ENCODE measurements at regions of chr2 and their contacts with region 1.

Region 1: GRCh38 chr2:162243294-162243693 is at the start of gene FAP:
- DNase-seq: no peak
- ATAC-seq: no peak
- H3K4me3 Mint-ChIP-seq: no peak within 1 kb of the TSS
- H3K27ac Mint-ChIP-seq: no peak within 1 kb of the TSS
- H3K4me1 Mint-ChIP-seq: no peaks in the 10 kb centered on the region
- H3K27me3 Mint-ChIP-seq: peaks cover 17% of the 10 kb centered on the region
- CTCF ChIP-seq: no peak
- total RNA-seq, gene FAP: not detected

Region 2: DNA sequence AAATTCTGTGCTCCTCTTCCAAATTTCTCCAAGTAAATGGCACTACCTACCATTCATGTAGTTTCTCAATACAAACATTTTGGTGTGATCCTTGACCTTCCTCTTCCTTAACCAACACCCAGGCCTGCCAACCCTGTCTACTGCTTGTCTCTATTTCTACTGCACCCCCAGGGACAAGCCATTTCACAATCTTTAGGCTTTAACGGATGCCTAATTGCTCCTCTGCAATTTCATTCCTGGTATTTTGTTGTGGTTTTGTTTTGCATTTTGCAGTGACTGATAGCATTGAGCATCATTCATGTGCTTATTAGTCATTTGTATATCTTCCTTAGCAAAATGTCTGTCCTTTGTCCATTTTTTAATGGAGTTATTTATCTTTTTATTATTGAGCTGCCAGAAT is 10.1 kb before region 1 on chr2:
- CTCF ChIA-PET with region 1: interaction called, 10 read pairs
- POLR2A ChIA-PET with region 1: no interaction called
- intact Hi-C with region 1: no loop called
- DNase-seq: no peak
- ATAC-seq: no peak
- H3K4me3 Mint-ChIP-seq: no peak overlapping the region
- H3K27ac Mint-ChIP-seq: no peak overlapping the region
- H3K4me1 Mint-ChIP-seq: no peaks in the 10 kb centered on the region
- H3K27me3 Mint-ChIP-seq: peaks cover 9% of the 10 kb centered on the region
- CTCF ChIP-seq: no peak

Region 3: GRCh38 chr2:162266460-162266760 is 23.1 kb after region 1 on chr2:
- CTCF ChIA-PET with region 1: no interaction called
- POLR2A ChIA-PET with region 1: no interaction called
- intact Hi-C with region 1: no loop called
- DNase-seq: no peak
- ATAC-seq: no peak
- H3K4me3 Mint-ChIP-seq: no peak overlapping the region
- H3K27ac Mint-ChIP-seq: no peak overlapping the region
- H3K4me1 Mint-ChIP-seq: peaks cover 6% of the 10 kb centered on the region
- H3K27me3 Mint-ChIP-seq: no peaks in the 10 kb centered on the region
- CTCF ChIP-seq: no peak

Region 4: GRCh38 chr2:162430323-162430722 is 187.0 kb after region 1 on chr2:
- CTCF ChIA-PET with region 1: no interaction called
- POLR2A ChIA-PET with region 1: no interaction called
- intact Hi-C with region 1: no loop called
- DNase-seq: no peak
- ATAC-seq: no peak
- H3K4me3 Mint-ChIP-seq: no peak overlapping the region
- H3K27ac Mint-ChIP-seq: no peak overlapping the region
- H3K4me1 Mint-ChIP-seq: no peaks in the 10 kb centered on the region
- H3K27me3 Mint-ChIP-seq: no peaks in the 10 kb centered on the region
- CTCF ChIP-seq: no peak

Measured in activated CD8-positive, alpha-beta T cell treated with anti-CD3 and anti-CD28 coated beads for 36 hours (primary cell).